ENCODE measurements at regions of chr11 and their contacts with region 1.

Region 1: GRCh38 chr11:128021349-128022006 is 565.9 kb downstream of the ETS1 start:
- DNase-seq: no peak
- ATAC-seq: no peak
- H3K4me3 ChIP-seq: no peak overlapping the region
- H3K27ac ChIP-seq: no peak overlapping the region
- H3K4me1 ChIP-seq: peaks cover 0 to 2% (median 0%) of the 10 kb centered on the region in 9 donors
- H3K27me3 ChIP-seq: peaks cover 0 to 7% (median 0%) of the 10 kb centered on the region in 7 donors
- CTCF ChIP-seq: peak in 6 of 9 donors; percentile 24 to 48 (median 34)

Region 2: DNA sequence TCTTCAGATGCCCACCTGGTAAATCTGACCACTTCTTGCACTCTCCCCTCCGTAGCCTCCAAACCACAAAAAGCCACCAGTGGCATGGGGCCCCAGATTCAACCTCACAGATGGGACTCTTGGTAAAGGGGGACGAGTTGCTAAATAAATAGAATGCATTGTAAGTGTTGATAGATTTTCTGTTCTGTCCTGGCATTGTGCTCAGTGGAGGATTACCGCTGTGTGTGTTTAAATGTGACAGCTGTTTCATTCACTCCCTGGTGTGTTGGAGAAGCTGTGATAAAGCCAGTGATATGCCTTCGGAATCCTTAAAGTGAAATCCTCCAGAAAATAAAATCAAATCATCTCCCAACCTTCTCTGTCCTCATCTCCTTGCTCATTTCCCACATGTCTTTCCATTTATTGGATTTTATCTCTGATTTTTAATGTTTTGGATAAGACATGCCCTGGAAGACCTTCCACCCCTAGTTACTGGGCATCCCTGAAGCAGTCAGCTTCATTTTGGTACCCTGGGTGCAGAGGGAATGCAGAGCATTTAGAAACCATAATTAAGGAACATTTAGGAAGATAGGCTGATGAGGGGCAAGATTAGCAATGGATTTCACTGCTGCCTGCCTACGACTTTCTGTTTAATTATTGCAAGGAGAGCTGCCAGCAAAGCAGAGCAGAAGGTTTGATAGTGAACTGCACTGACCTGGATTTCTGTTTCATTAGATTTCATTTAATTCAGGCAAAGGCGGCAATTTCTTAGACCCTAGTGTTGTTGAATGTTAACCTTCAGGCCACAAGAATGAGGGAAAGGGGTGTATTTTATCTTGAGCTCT is 560.0 kb before region 1 on chr11:
- intact Hi-C with region 1: loop called in 1 of 10 experiments (anchors 5 kb)
- DNase-seq: no peak
- ATAC-seq: no peak
- H3K4me3 ChIP-seq: no peak overlapping the region
- H3K27ac ChIP-seq: no peak overlapping the region
- H3K4me1 ChIP-seq: no peaks in the 10 kb centered on the region
- H3K27me3 ChIP-seq: peaks cover 0 to 7% (median 0%) of the 10 kb centered on the region in 7 donors
- CTCF ChIP-seq: no peak

Region 3: GRCh38 chr11:127496165-127496564 is 525.3 kb before region 1 on chr11:
- intact Hi-C with region 1: no loop called
- DNase-seq: no peak
- ATAC-seq: no peak
- H3K4me3 ChIP-seq: no peak overlapping the region
- H3K27ac ChIP-seq: no peak overlapping the region
- H3K4me1 ChIP-seq: peaks cover 0 to 8% (median 0%) of the 10 kb centered on the region in 9 donors
- H3K27me3 ChIP-seq: no peaks in the 10 kb centered on the region
- CTCF ChIP-seq: no peak

Region 4: DNA sequence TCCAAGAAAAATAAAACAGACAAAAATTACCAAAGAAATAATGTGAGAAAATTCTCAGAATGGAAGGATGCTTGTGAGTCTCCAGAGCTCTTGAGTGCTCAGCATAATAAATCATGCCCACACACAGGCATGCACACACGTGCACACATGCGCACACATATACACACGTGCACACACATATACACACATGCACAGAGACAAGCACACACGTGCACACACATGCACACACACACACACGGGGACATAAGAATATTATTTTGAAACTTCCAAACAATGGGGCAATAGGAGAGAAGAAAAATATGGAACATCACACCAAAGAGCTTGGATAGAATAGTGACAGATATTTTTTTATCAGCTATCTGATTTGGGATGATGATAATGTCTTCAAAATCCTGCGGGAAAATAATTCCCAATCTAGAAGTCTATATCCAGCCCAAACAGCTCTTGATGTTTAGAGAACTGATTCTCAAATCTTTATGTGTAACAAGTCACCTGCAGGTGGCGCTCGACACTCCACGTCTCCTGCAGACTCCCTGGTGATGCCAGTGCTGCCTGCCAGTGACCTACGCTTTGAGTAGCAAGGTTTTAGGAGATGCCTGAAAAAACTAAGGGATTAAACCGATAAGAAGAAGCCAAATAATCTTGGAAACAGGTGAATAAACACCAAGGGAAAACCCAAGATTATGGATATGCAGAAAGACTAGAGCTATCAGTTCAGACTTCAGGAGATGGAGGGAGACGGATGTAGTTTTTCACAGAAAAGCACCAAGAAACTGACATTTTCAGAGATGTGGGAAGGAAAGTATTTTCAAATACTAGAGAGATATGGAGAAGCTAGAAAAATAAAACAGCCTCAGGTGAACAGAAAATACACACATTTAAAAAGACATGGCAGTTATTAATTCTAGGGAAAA is 177.7 kb before region 1 on chr11:
- intact Hi-C with region 1: loop called in 2 of 10 experiments (anchors 10 kb)
- DNase-seq: peak; percentile 55 to 63
- ATAC-seq: no peak
- H3K4me3 ChIP-seq: no peak overlapping the region
- H3K27ac ChIP-seq: no peak overlapping the region
- H3K4me1 ChIP-seq: no peaks in the 10 kb centered on the region
- H3K27me3 ChIP-seq: peaks cover 0 to 5% (median 0%) of the 10 kb centered on the region in 7 donors
- CTCF ChIP-seq: peak; percentile 35 to 78 (median 65)

Region 5: DNA sequence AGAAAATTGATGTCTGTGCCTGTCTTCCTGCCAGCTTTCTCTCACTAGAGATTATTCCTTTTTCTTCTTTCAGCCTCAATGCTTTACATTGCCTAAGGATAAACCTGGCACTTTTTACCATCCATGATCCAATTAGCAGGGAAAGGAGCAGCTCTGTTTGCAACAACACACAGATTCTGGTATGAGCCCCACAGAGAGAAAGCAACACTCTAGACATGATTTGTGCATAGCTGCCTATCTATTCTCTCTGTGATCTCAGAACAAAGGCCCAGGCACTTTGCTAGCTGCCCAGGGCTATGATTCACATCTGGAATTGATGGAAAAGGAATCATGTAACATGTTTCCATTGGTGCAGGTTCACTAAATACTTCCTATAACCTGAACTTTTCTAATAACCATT is 119.1 kb before region 1 on chr11:
- intact Hi-C with region 1: no loop called
- DNase-seq: no peak
- ATAC-seq: no peak
- H3K4me3 ChIP-seq: no peak overlapping the region
- H3K27ac ChIP-seq: no peak overlapping the region
- H3K4me1 ChIP-seq: no peaks in the 10 kb centered on the region
- H3K27me3 ChIP-seq: no peaks in the 10 kb centered on the region
- CTCF ChIP-seq: no peak

Region 6: GRCh38 chr11:128859563-128860441 is 838.3 kb after region 1 on chr11:
- intact Hi-C with region 1: loop called in 1 of 10 experiments (anchors 10 kb)
- DNase-seq: peak; percentile 71 to 80
- ATAC-seq: peak; percentile 65 to 89 (median 86)
- H3K4me3 ChIP-seq: no peak overlapping the region
- H3K27ac ChIP-seq: peak overlapping the region in 4 of 10 donors; percentile 1 to 40 (median 22)
- H3K4me1 ChIP-seq: peaks cover 5 to 15% (median 10%) of the 10 kb centered on the region in 9 donors
- H3K27me3 ChIP-seq: no peaks in the 10 kb centered on the region
- CTCF ChIP-seq: peak; percentile 90 to 99 (median 96)

Measured in heart right ventricle (tissue), 16 donors.